ENCODE measurements at regions of chr1 and their contacts with region 1.

Region 1: GRCh38 chr1:107056426-107057196 is at the start of gene PRMT6:
- DNase-seq: peak; percentile 92
- H3K4me3 ChIP-seq: peak within 1 kb of the TSS; percentile 62 to 90 (median 80)
- H3K27ac ChIP-seq: peak within 1 kb of the TSS; percentile 83 to 93 (median 91)
- H3K4me1 ChIP-seq: peaks cover 0 to 24% (median 13%) of the 10 kb centered on the region in 4 donors
- H3K27me3 ChIP-seq: no peaks in the 10 kb centered on the region
- CTCF ChIP-seq: no peak
- EP300 ChIP-seq: no peak
- POLR2A ChIP-seq: peak; percentile 48 to 64
- total RNA-seq, gene PRMT6: 6.1 to 15.6 (median 11.9) TPM

Region 2: GRCh38 chr1:106755682-106756406 is 300.8 kb before region 1 on chr1:
- intact Hi-C with region 1: loop called (anchors 10 kb)
- DNase-seq: no peak
- H3K4me3 ChIP-seq: no peak overlapping the region
- H3K27ac ChIP-seq: no peak overlapping the region
- H3K4me1 ChIP-seq: peaks cover 0 to 52% (median 26%) of the 10 kb centered on the region in 4 donors
- H3K27me3 ChIP-seq: no peaks in the 10 kb centered on the region
- CTCF ChIP-seq: no peak
- EP300 ChIP-seq: no peak
- POLR2A ChIP-seq: no peak

Region 3: GRCh38 chr1:106975944-106976343 is 80.7 kb before region 1 on chr1:
- intact Hi-C with region 1: loop called (anchors 5 kb)
- DNase-seq: no peak
- H3K4me3 ChIP-seq: no peak overlapping the region
- H3K27ac ChIP-seq: no peak overlapping the region
- H3K4me1 ChIP-seq: peaks cover 0 to 23% (median 3%) of the 10 kb centered on the region in 4 donors
- H3K27me3 ChIP-seq: no peaks in the 10 kb centered on the region
- CTCF ChIP-seq: no peak
- EP300 ChIP-seq: no peak
- POLR2A ChIP-seq: no peak

Region 4: DNA sequence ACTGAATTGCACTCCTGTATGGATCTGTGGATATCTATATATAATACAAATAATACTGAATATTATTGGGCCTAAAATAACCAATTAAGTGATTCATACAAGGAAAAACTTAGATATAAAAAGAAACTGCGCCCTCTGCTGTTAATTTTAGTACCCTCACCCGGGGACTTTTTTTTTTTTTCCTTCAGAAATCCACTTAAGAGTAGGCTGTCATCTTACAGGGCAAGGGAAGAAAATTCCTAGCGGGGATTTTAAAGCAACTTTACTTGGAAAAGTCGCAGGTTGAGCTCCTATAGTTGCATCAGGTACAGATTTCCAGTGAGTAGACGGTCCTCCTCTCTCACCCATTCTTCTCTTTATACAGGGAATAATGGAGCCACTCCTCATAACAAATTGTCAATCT is 85.5 kb after region 1 on chr1:
- intact Hi-C with region 1: loop called (anchors 2 kb)
- DNase-seq: no peak
- H3K4me3 ChIP-seq: peak overlapping the region; percentile 58 to 73 (median 68)
- H3K27ac ChIP-seq: peak overlapping the region in 2 of 4 donors; percentile 49 to 73
- H3K4me1 ChIP-seq: peaks cover 0 to 21% (median 15%) of the 10 kb centered on the region in 4 donors
- H3K27me3 ChIP-seq: no peaks in the 10 kb centered on the region
- CTCF ChIP-seq: peak; percentile 20 to 71 (median 38)
- EP300 ChIP-seq: no peak
- POLR2A ChIP-seq: no peak

Measured in sigmoid colon (tissue), 7 donors.